ENCODE measurements at regions of chr14 and their contacts with region 1.

Region 1: GRCh38 chr14:90758028-90758889 is 58.0 kb downstream of the TTC7B start:
- DNase-seq: peak; percentile 47
- H3K4me3 ChIP-seq: peak overlapping the region; percentile 45
- H3K27me3 ChIP-seq: no peaks in the 10 kb centered on the region
- CTCF ChIP-seq: peak; percentile 81

Region 2: DNA sequence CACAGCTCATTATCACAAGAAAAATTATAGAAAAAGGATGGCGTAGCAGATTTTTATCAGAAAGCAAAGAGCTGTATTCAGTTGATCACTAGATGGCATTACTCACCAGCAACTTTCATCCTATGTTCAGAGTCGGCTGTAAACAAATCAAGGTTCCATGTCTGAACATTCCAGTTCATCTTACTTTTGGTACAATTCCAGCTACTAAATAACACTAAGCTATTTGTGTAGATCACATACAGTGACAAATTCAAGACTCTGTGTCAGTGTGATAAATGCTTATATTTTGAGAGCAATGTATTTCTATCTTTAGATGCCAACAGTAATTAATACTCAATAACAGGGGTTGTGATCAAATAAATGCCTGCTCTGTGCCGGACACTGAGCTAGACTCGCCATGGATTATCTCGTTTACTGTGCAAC is 456.6 kb before region 1 on chr14:
- CTCF ChIA-PET with region 1: interaction called, 24 read pairs
- POLR2A ChIA-PET with region 1: no interaction called
- DNase-seq: no peak
- H3K4me3 ChIP-seq: no peak overlapping the region
- H3K27me3 ChIP-seq: no peaks in the 10 kb centered on the region
- CTCF ChIP-seq: peak; percentile 57

Region 3: DNA sequence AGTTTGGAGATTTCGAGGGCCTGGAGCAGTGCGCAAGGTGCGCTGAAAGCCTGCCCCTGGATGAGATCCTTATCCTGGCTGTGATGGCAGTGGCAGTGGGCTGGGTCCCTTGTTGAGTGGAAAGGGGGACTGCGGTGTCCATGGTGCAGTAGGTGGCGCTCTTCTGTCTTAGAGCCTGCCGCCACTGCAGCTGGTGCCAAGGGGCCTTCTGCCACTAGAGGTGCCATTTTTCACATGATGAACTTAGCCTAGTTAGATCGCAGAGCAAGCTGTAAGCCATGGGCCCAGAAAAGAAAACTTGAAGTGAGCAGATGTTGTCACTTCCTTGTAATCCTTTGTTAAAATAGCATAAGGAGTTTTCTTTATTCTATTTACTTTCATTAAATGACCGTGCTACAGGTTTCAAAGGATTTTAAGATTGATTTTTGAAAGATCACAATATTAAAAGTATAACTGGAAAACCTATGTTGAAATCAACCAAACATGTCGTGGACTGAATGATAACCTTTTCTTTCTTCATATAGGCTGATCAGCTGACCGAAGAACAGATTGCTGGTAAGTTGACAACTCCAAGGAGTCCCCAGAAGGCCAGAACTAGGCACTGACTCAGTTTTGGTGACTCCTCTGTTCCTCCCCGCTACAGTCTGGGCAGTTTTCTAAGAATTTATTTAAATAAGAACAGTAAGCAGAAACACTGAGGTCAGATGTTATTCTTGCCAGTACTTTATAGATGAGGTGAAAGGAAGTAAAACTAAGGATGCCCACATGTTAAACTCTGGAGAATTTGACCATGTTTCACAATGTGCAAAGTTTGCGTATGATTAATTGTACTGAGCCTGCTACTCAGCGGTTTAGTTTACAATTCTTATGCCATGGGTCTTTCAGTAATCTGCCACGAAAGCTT is 358.5 kb before region 1 on chr14:
- CTCF ChIA-PET with region 1: interaction called, 11 read pairs
- POLR2A ChIA-PET with region 1: no interaction called
- DNase-seq: no peak
- H3K4me3 ChIP-seq: no peak overlapping the region
- H3K27me3 ChIP-seq: no peaks in the 10 kb centered on the region
- CTCF ChIP-seq: peak; percentile 99

Region 4: DNA sequence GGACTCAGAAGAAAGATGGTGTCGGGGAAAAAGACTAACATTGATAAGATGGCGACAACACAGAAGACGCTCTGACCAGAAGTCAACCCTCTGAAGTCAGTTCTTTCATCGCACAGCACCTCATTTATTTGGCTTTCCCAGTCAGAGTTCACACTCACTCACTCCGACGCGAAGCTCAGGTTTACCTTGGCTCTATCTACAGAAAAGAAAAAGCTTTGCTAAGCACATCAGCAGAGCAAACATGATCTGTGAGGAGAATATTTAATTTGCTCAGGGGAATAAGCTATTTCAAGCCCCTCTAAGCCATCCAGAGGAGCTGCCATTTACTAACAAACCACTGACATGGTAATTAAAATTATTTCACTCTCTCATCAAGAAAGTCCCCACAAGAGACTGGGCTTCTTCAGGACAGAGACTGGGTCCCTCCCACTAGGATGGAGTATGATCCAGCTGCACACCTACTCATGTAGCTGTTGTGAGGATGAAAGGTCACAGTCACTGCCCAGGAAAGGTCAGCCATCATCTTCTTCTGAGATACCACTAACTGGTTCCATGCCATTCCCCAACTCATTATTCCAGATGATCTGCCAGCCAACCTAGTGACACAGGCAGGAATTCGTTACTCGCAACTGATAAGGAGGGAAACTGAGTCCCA is 53.4 kb before region 1 on chr14:
- CTCF ChIA-PET with region 1: no interaction called
- POLR2A ChIA-PET with region 1: no interaction called
- DNase-seq: no peak
- H3K4me3 ChIP-seq: no peak overlapping the region
- H3K27me3 ChIP-seq: no peaks in the 10 kb centered on the region
- CTCF ChIP-seq: no peak

Region 5: GRCh38 chr14:90717916-90718315 is 40.3 kb before region 1 on chr14:
- CTCF ChIA-PET with region 1: interaction called, 11 read pairs
- POLR2A ChIA-PET with region 1: no interaction called
- DNase-seq: peak; percentile 29
- H3K4me3 ChIP-seq: no peak overlapping the region
- H3K27me3 ChIP-seq: no peaks in the 10 kb centered on the region
- CTCF ChIP-seq: no peak

Region 6: DNA sequence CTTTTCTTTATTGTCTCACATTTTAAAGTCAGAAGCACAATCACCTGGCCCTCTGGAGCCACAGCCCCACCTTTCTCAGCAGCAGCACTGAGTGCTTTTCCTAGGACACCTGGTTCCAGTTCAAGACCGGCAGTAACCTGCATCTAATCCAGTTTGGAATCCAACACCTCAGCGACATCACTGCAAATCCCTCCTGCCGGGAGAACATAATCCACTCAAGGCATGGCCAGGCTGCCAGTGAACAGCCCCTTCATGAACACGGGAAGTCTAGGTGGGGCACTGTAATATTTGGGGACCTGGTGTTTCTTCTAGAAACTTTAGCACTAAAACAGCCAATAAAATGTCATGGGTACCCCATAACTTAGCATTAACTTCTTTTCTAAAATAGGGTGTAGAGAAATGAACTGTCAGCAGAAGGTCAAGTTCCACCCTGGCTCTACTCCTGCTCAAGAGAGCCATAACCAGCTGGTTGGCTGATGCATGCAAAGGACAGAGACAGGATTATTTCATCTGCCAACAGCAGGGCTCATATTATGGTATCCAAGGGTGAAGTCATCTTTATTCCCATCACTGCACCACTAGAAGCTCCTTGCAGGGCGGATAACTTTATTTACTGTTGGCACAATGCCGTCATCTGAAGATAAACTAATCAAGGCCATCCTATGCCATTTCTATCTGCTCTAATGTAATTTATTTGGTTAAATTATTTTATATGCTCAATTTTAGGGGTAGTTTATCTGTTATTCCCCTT is 18.8 kb before region 1 on chr14:
- CTCF ChIA-PET with region 1: interaction called, 12 read pairs
- POLR2A ChIA-PET with region 1: no interaction called
- DNase-seq: no peak
- H3K4me3 ChIP-seq: no peak overlapping the region
- H3K27me3 ChIP-seq: no peaks in the 10 kb centered on the region
- CTCF ChIP-seq: no peak

Region 7: DNA sequence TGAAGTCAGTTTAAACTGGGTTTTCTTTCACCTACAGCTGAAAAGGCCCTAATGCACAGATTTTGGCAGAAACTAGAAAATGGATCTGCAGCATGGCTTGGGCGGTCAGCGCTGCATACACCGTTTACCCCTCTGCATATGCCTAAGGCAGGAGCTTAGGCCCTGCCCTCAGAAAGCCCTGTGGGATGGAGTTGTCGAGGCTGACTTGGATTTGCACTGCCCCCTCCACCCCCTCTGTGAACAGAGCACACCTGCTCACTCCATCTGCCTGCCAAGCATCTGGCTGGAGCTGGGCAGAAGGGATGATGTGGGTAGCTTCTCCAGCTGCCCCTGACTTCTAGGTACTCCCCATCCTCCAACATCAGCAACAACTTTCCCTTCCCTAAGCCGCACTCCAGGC is 16.1 kb after region 1 on chr14:
- CTCF ChIA-PET with region 1: interaction called, 64 read pairs
- POLR2A ChIA-PET with region 1: no interaction called
- DNase-seq: no peak
- H3K4me3 ChIP-seq: no peak overlapping the region
- H3K27me3 ChIP-seq: no peaks in the 10 kb centered on the region
- CTCF ChIP-seq: no peak